T-cell (primary cell): ENCODE measurements at regions of chr22 and their contacts with region 1.

Region 1: DNA sequence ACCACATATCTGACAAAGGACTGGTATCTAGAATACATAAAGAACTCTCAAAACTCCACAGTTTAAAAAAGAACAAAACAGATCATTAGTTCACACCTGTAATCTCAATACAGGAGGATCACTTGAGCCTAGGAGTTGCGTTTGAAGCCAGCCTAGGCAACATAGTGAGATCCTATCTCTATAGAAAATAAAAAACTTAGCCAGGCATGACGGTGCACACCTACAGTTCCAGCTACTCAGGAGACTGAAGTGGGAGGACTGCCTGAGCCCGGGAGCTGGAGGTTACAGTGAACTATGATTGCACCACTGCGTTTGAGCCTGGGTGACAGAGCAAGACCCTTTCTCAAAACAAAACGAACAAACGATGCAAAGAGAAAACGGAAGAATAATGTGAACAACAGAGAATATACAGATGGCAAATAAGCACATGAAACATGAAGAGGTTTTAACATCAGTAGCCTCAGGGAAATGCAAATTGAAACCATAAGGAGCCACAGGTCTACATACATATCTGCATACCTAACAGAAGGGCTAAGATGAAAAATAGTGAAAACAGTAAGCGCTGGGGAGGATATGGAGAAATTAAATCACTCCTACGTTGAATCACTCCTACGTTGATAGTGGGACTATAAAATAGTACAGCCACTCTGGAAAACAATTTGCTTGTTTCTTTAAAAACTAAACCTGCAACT is 70.7 kb downstream of the DGCR2 start:
- DNase-seq: no peak
- ATAC-seq: no peak
- H3K4me3 ChIP-seq: no peak overlapping the region
- H3K4me3 Mint-ChIP-seq: no peak overlapping the region
- H3K27ac ChIP-seq: no peak overlapping the region
- H3K27ac Mint-ChIP-seq: no peak overlapping the region
- H3K4me1 ChIP-seq: no peaks in the 10 kb centered on the region
- H3K4me1 Mint-ChIP-seq: peaks cover 4 to 16% (median 6%) of the 10 kb centered on the region in 3 donors
- H3K27me3 ChIP-seq: no peaks in the 10 kb centered on the region
- H3K27me3 Mint-ChIP-seq: no peaks in the 10 kb centered on the region

Region 2: DNA sequence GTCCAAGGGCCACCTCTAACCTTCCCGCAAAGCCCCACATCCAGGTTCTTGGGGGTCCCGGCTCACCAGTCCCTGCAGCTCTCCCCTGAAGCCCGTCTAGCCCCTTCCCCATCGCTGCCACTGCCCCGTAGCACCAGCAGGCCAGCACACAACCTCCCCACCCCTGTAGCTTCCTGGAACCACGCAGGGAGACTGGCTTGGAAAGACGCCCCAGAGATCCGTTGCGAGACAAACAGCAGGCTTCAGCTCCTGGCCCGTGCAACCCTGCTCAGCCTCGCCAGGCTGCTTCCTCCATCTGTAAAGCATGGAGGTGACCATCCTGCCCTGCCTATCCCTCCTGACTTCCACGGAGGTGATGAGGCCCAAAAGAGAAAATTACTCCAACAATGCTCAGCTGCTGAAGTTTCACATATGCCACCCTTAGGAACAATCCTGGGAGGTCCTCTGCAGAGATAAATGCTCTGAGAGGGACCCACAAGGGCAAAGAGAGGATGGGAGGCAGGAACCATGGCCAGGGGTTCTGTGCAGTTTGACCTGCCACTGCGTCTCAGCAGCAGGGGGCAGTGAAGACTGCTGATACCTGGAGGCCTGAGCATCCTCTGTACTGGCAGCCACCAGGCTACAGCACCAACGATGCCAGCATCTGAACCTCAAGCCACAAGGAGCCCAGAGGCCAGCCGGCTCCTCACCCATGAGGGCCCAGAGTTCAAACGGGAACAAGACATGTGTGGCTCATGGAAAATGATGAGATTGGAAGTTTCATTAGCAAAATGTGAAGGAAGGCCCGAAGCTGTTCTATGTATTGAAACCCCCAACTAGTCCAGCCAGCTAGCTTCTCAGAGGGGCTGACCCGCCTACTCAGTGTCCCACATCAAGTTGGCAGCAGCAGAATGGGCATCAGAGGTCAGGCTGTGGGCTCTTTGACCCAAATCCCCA is 54.6 kb after region 1 on chr22:
- CTCF ChIA-PET with region 1: no interaction called
- POLR2A ChIA-PET with region 1: interaction called in 1 of 2 experiments, 14 read pairs
- DNase-seq: peak; percentile 14 to 72 (median 55)
- ATAC-seq: peak; percentile 40 to 46 (median 43)
- H3K4me3 ChIP-seq: no peak overlapping the region
- H3K4me3 Mint-ChIP-seq: peak overlapping the region in 1 of 3 donors; percentile 37
- H3K27ac ChIP-seq: peak overlapping the region; percentile 87
- H3K27ac Mint-ChIP-seq: peak overlapping the region; percentile 90 to 95
- H3K4me1 ChIP-seq: peaks cover 23 to 48% of the 10 kb centered on the region in 2 experiments
- H3K4me1 Mint-ChIP-seq: peaks cover 73 to 83% (median 77%) of the 10 kb centered on the region in 3 donors
- H3K27me3 ChIP-seq: no peaks in the 10 kb centered on the region
- H3K27me3 Mint-ChIP-seq: no peaks in the 10 kb centered on the region